ENCODE measurements at regions of chr9 and their contacts with region 1.

Region 1: GRCh38 chr9:80127920-80128319 is 556.2 kb downstream of the TLE4 start:
- DNase-seq: no peak
- ATAC-seq: no peak
- H3K4me3 ChIP-seq: no peak overlapping the region
- H3K4me3 Mint-ChIP-seq: no peak overlapping the region
- H3K27ac ChIP-seq: no peak overlapping the region
- H3K27ac Mint-ChIP-seq: no peak overlapping the region
- H3K4me1 ChIP-seq: peaks cover 0 to 6% of the 10 kb centered on the region in 2 donors
- H3K4me1 Mint-ChIP-seq: peaks cover 7% of the 10 kb centered on the region
- H3K27me3 ChIP-seq: no peaks in the 10 kb centered on the region
- H3K27me3 Mint-ChIP-seq: no peaks in the 10 kb centered on the region
- CTCF ChIP-seq: no peak

Region 2: DNA sequence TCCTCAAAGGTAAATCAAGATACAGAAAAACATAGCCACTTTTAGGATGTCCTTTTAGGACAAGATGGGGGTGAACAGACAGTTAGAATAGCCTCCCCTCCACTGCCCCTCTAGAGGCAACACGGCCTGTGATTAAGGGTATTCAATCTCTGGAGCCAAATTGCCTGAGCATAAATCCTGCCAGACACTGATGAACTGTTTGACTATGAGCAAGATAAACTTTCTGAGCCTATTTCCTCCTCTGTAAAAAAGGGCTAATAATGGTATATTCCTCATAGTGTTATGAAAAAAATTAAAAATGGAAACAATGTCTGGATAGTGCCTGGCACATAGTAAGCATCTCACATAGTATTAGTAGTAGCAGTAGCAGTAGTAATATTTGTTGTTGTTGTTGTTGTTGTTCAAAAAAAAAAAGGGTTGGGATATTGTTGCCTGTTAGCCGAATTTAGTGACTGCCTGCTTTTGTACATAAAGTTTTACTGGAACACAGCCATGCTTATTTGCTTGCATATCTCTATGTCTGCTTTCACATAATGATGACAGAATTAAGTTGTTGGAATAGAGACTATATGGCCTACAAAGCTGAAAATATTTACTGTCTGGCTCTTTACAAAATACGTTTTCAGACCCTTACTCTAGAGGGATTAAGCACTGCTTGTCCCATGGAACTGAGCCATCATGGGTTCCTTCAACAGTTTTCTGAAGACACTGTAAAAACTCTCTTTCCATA is 19.8 kb before region 1 on chr9:
- CTCF ChIA-PET with region 1: no interaction called
- POLR2A ChIA-PET with region 1: interaction called, 10 read pairs
- intact Hi-C with region 1: no loop called
- DNase-seq: no peak
- ATAC-seq: no peak
- H3K4me3 ChIP-seq: no peak overlapping the region
- H3K4me3 Mint-ChIP-seq: no peak overlapping the region
- H3K27ac ChIP-seq: no peak overlapping the region
- H3K27ac Mint-ChIP-seq: no peak overlapping the region
- H3K4me1 ChIP-seq: peaks cover 3 to 10% of the 10 kb centered on the region in 2 donors
- H3K4me1 Mint-ChIP-seq: peaks cover 11% of the 10 kb centered on the region
- H3K27me3 ChIP-seq: no peaks in the 10 kb centered on the region
- H3K27me3 Mint-ChIP-seq: no peaks in the 10 kb centered on the region
- CTCF ChIP-seq: no peak

Region 3: GRCh38 chr9:80231201-80231950 is 103.5 kb after region 1 on chr9:
- CTCF ChIA-PET with region 1: no interaction called
- POLR2A ChIA-PET with region 1: no interaction called
- intact Hi-C with region 1: no loop called
- DNase-seq: no peak
- ATAC-seq: no peak
- H3K4me3 ChIP-seq: peak overlapping the region in 4 of 5 experiments; percentile 43 to 63 (median 51)
- H3K4me3 Mint-ChIP-seq: peak overlapping the region; percentile 83
- H3K27ac ChIP-seq: peak overlapping the region; percentile 88 to 91
- H3K27ac Mint-ChIP-seq: peak overlapping the region; percentile 95
- H3K4me1 ChIP-seq: peaks cover 49 to 53% of the 10 kb centered on the region in 2 donors
- H3K4me1 Mint-ChIP-seq: peaks cover 55% of the 10 kb centered on the region
- H3K27me3 ChIP-seq: no peaks in the 10 kb centered on the region
- H3K27me3 Mint-ChIP-seq: no peaks in the 10 kb centered on the region
- CTCF ChIP-seq: no peak

Measured in B cell (primary cell).